ENCODE measurements at regions of chr10 and their contacts with region 1.

Region 1: DNA sequence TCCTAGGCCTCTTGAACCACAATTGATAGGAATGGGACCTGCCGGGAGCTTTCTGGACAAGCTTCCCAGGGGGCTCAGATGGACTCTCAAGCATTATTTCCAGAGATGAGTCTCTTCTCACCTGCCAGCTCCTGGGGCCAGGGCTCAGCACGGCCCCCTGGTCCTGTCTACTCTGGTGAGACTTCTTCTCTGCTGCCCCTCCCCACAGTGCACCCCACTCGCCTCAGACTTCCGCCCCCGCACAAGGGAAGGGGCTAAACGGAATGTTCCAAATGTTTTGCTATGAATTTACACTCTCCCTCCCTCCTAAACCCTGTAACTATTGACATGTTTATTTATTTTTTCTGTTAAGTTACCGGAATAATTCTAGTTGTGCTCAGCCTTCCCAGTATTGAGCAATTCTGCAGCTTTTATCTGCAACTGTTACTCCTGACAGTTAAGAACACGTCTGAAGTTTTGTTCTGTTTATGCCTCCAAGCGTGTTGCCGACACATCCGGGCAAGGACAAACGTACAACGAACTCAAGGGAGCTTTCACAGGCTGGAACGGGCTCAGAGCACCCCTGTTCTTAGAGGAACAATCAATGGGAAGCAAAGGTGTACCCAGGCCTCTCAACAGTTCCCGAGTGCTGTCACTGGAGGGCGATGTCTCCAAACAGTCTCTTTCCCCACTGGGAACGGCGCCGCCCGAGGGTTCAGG is 55.2 kb downstream of the FHIP2A start:
- DNase-seq: peak; percentile 85

Region 2: DNA sequence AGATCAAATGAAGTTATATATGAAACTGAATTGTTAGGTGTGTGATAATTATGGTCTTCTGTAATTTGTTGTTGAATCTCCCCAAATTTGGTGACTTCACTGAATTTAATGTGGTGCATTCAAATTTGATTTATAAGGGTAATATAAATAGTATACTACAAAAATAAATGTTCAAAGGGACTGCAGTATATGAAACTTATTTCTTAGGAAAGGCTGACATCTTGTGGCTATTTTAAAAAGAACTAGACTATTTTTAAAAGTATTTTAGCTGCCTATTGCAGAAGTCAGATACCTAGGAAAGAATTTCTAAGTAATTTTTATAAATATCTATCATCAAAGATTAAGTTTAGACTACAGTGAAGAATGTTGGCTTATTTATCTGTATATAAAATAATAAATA is 253.0 kb after region 1 on chr10:
- CTCF ChIA-PET with region 1: interaction called, 18 read pairs
- POLR2A ChIA-PET with region 1: no interaction called
- DNase-seq: no peak